ENCODE measurements at regions of chr3 and their contacts with region 1.

Region 1: GRCh38 chr3:123028233-123028828 is 768 bp upstream of the SEMA5B start:
- DNase-seq: peak in 1 of 2 donors; percentile 68
- H3K4me3 ChIP-seq: peak overlapping the region; percentile 64 to 65
- H3K27ac ChIP-seq: no peak overlapping the region
- H3K4me1 ChIP-seq: peaks cover 8 to 13% of the 10 kb centered on the region in 2 donors
- H3K27me3 ChIP-seq: no peaks in the 10 kb centered on the region
- CTCF ChIP-seq: peak; percentile 43 to 75 (median 52)

Region 2: DNA sequence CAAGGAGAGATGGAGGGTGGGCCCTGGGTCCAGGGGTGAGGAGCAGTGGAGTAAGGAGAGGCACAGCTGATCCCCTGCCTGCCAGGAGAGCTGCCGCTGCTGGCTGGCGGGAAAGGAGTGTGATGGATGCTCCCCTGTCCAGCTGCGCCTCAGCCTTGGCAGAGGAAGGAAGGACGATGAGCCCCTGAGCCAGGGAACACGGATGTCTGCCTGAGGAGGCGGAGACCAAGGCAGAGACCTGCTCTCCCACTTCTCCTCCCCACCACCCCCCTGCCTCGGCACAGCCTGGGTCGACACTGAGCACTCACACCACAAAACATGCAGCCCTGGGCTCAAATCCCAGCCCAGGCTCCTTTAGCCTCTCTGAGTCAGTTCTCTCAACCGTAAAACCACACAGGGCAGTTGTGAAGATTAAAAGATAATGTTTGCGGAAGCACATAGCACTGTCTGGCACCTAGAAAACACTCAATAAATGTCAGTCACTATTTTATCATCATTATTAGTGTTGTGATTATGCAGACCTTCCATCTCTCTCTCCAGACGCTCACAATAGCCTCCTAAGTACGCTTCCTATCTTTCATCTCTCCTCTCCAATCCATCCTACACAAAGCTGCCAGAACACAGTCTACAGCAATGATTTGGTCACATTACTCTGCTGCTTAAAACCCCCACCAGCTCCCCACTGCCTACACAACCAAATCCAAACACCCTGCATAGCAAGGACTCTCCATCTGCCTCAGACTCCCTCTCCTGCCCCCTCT is 53.0 kb before region 1 on chr3:
- intact Hi-C with region 1: loop called (anchors 5 kb)
- DNase-seq: peak in 1 of 2 donors; percentile 66
- H3K4me3 ChIP-seq: no peak overlapping the region
- H3K27ac ChIP-seq: peak overlapping the region; percentile 80 to 90
- H3K4me1 ChIP-seq: peaks cover 24 to 38% of the 10 kb centered on the region in 2 donors
- H3K27me3 ChIP-seq: no peaks in the 10 kb centered on the region
- CTCF ChIP-seq: no peak

Region 3: GRCh38 chr3:123015557-123015956 is 12.8 kb before region 1 on chr3:
- intact Hi-C with region 1: no loop called
- DNase-seq: no peak
- H3K4me3 ChIP-seq: no peak overlapping the region
- H3K27ac ChIP-seq: no peak overlapping the region
- H3K4me1 ChIP-seq: no peaks in the 10 kb centered on the region
- H3K27me3 ChIP-seq: no peaks in the 10 kb centered on the region
- CTCF ChIP-seq: no peak

Region 4: DNA sequence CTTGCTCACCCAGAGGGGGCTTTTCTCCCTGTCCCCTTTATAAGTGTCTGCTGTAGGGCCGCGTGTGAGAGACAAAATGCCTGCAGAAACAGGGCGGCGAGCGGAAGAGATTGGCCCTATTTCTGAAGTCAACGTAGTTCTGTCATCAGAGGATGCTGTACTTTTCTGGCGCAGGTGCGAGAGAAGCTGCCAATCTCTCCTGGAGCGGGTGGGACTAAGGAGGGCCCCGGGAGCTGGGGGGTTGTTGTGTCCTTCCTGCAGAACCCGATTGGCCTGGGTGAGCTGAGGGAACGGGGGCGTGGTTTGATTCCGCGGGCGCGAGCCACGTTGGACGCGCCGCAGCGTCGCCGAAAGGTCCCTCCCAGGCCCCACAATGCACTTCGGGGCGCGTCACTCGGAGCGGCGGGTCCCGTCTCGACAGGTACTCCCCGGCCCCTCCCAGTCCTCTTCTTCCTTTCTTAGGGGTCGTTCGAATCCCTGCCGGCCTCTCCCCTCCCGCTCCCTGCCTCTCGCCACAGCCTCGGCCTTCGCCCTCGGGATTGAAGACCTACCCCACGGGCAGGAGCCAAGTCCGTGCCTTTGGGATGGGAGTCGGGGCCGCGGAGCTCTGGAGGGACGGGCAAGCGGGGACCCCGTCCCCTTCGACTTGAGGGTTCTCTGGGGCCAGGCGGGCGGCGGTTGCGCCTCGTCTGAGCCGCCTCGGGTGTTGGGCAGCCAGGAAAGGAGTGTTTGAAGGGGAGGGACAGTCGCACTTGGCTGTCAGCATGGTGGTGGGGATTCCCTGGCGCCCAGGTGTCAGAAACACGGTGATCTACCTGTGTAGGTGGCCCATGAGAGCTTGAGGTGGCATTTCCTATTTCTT is 173.5 kb after region 1 on chr3 and contains the start of gene SEC22A:
- intact Hi-C with region 1: loop called (anchors 10 kb)
- DNase-seq: peak; percentile 71 to 96
- H3K4me3 ChIP-seq: peak within 1 kb of the TSS; percentile 74 to 83
- H3K27ac ChIP-seq: peak within 1 kb of the TSS; percentile 67 to 84
- H3K4me1 ChIP-seq: peaks cover 0 to 3% of the 10 kb centered on the region in 2 donors
- H3K27me3 ChIP-seq: no peaks in the 10 kb centered on the region
- CTCF ChIP-seq: no peak
- total RNA-seq, gene SEC22A: 6.4 TPM

Region 5: DNA sequence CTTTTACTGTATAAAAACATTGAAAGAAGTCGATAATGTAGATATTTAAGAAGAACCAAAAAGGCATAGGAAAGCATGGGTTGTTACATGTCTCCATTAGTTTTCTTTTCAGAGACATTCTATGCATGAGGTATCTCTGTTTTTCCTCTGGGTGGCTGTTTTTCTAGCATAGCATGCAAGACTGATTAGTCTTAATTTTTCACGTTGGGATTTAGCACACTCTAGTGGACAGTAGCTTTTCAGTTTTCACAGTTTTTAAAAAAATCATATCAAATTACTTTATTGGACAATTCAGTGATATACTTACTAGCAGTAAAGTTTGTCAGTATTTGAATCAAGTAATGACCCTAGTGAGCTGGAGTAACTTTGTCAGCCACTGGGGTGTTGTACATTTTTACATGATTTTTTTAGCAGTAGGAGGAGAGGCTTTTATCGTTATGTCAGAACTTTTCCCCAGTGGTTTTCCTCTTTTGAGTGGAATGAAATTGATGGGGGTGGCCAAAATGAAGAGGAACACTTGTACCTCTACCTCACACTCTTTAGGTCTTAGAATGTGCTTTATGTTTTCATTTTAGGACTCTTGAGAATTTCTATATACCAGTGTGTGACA is 230.6 kb after region 1 on chr3:
- intact Hi-C with region 1: loop called (anchors 5 kb)
- DNase-seq: no peak
- H3K4me3 ChIP-seq: no peak overlapping the region
- H3K27ac ChIP-seq: no peak overlapping the region
- H3K4me1 ChIP-seq: no peaks in the 10 kb centered on the region
- H3K27me3 ChIP-seq: no peaks in the 10 kb centered on the region
- CTCF ChIP-seq: peak; percentile 51 to 62 (median 58)